ENCODE measurements at regions of chr10 and their contacts with region 1.

Region 1: GRCh38 chr10:32023264-32023663 is 33.0 kb downstream of the KIF5B start:
- DNase-seq: no peak
- H3K4me3 Mint-ChIP-seq: no peak overlapping the region
- H3K27ac Mint-ChIP-seq: no peak overlapping the region
- H3K4me1 Mint-ChIP-seq: peaks cover 4% of the 10 kb centered on the region
- H3K27me3 Mint-ChIP-seq: no peaks in the 10 kb centered on the region

Region 2: GRCh38 chr10:30625080-30625479 is 1398.2 kb before region 1 on chr10:
- CTCF ChIA-PET with region 1: no interaction called
- POLR2A ChIA-PET with region 1: interaction called, 10 read pairs
- DNase-seq: no peak
- H3K4me3 Mint-ChIP-seq: no peak overlapping the region
- H3K27ac Mint-ChIP-seq: no peak overlapping the region
- H3K4me1 Mint-ChIP-seq: no peaks in the 10 kb centered on the region
- H3K27me3 Mint-ChIP-seq: peaks cover 5% of the 10 kb centered on the region

Region 3: DNA sequence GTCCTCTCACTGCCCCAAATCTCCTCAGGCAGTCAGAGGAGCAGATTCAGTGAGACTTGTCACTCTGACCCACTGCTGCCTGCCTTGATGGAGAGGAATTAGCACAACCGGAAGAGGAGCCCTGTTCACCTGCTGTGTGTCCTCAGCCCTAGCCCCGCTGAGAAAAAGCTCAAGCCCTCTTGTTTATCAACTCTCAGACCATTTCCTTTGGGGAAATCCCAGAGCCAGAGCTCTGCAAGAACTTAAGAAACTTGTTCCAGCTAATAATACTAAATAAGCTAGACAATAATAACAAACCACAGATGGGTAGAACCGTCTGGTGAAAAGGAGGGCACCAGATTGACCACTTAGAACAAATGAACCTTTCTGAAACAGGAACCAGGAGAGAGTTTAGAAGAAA is 972.5 kb after region 1 on chr10:
- CTCF ChIA-PET with region 1: no interaction called
- POLR2A ChIA-PET with region 1: no interaction called
- DNase-seq: no peak
- H3K4me3 Mint-ChIP-seq: no peak overlapping the region
- H3K27ac Mint-ChIP-seq: no peak overlapping the region
- H3K4me1 Mint-ChIP-seq: peaks cover 1% of the 10 kb centered on the region
- H3K27me3 Mint-ChIP-seq: peaks cover 5% of the 10 kb centered on the region